Breast epithelium (tissue), 4 donors: ENCODE measurements at regions of chr11 and their contacts with region 1.

Region 1: GRCh38 chr11:79287952-79288351 is 152.9 kb downstream of the TENM4 start:
- DNase-seq: no peak
- H3K4me3 ChIP-seq: no peak overlapping the region
- H3K27ac ChIP-seq: no peak overlapping the region
- H3K4me1 ChIP-seq: no peaks in the 10 kb centered on the region
- H3K27me3 ChIP-seq: no peaks in the 10 kb centered on the region
- CTCF ChIP-seq: no peak
- POLR2A ChIP-seq: no peak

Region 2: DNA sequence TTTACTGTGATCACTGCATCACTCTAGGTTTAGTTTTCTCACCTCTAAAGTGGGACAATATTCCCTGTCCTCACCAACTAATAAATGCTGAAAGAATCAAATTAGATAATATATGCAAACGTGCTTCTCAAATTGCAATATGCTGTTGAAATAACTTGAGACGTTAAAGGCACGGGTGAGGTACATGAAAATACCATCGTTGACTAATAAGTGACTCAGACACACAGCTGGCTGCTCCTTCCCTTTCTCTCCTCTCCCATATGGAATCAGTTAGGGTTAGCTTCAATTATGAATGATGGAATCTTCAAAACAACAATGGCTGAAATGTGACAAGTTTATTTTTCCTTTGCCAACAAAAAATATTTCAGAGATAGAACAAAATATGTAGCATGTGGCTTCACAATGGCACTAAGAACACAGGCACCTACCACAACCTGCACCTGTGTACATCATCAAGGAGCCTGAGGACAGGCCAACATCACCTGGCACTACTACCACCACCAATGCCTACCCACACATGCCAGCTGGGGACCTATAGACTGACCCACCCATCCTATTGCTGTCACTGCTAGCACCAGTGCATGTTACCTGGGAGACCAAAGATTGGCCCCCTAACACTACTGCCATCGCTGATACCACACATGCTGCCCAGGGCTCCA is 2000.2 kb before region 1 on chr11:
- intact Hi-C with region 1: no loop called
- DNase-seq: no peak
- H3K4me3 ChIP-seq: no peak overlapping the region
- H3K27ac ChIP-seq: no peak overlapping the region
- H3K4me1 ChIP-seq: no peaks in the 10 kb centered on the region
- H3K27me3 ChIP-seq: no peaks in the 10 kb centered on the region
- CTCF ChIP-seq: no peak
- POLR2A ChIP-seq: no peak

Region 3: DNA sequence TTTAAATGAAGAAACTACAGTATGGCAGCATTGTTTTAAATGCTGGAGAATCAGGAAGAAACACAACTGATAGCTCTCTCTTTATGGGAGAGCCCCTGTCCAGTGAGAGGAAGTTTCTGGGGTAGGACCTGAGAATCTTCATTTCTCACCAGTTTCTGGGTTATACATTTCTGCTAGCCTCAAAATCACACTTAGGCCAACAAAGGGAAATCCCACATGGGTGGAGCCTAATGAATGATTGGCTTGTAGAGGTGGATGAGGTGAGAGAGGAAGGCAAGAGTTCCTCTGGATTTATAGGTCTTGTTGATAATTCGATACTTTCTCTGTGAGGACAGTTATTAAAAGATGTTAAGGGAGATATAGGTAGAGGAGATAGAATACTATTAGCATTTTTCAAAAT is 1550.2 kb after region 1 on chr11:
- intact Hi-C with region 1: loop called (anchors 5 kb)
- DNase-seq: no peak
- H3K4me3 ChIP-seq: no peak overlapping the region
- H3K27ac ChIP-seq: no peak overlapping the region
- H3K4me1 ChIP-seq: no peaks in the 10 kb centered on the region
- H3K27me3 ChIP-seq: no peaks in the 10 kb centered on the region
- CTCF ChIP-seq: no peak
- POLR2A ChIP-seq: no peak